AG04450 (cell line): ENCODE measurements at regions of chr12 and their contacts with region 1.

Region 1: DNA sequence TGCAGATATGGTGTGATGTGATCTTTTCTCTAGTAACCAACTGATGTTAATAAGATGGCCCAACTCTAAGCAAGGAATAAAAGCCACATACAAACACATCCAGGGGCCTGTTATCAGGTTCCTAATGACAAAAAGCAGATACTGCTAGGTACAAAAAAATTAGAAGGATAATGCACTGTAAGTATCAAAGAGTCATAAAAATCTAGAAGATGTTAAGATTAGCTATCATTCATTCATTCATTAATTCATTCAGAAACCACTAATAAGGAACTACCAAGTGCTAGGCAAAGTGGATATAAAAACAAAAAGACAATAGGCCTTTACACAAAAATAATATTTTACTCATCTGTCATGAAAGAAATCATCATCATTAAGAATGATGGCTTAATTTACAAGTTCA is 21.6 kb downstream of the ATF7 start:
- DNase-seq: no peak
- H3K4me3 ChIP-seq: no peak overlapping the region
- H3K27ac ChIP-seq: no peak overlapping the region
- H3K27me3 ChIP-seq: no peaks in the 10 kb centered on the region
- CTCF ChIP-seq: no peak

Region 2: DNA sequence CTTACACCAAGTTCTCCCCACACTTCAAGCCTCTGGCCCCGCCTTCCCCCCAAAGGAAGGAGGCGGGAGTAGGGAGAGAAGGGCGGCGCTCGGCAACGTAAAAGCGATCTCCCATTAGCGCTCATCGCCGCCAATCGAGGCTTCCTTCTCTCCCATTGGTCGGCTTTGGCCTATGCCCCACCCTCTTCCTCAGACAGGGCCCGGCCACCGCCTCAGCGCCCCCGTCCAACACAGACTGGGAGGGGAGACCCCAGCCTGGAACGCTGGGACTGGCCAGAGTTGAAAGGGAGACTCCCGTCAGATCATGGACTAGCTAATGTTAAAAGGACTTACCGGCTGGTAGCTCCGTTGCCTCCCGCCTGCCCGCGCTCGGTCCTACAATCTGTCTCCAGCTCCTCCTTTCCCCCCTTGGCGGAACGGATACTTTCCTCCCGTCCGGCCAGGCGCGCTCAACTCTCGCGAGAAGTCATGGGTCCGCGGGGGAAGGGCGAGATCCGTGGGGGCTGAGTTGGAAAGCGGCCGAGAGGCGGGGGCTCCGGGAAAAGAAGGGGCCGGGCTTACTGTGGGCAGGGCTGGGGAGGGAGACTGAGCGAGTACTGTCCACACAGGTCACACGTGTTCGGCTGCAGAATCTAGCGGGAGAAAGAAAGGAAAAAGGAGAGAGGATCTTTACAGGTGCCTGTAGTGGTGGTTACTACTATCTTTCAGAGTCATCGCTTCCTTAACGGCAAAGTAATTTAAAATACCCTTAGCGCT is 21.5 kb after region 1 on chr12 and contains the start of gene ATF7:
- CTCF ChIA-PET with region 1: no interaction called
- POLR2A ChIA-PET with region 1: interaction called, 13 read pairs
- DNase-seq: peak; percentile 93
- H3K4me3 ChIP-seq: peak within 1 kb of the TSS; percentile 84
- H3K27ac ChIP-seq: peak within 1 kb of the TSS; percentile 93
- H3K27me3 ChIP-seq: no peaks in the 10 kb centered on the region
- CTCF ChIP-seq: no peak
- polyA plus RNA-seq, gene ATF7: 21.7 and 27.1 TPM in 2 replicates